Caco-2 (cell line): ENCODE measurements at regions of chr5 and their contacts with region 1.

Region 1: GRCh38 chr5:118987988-118988865 is at the start of gene DTWD2:
- DNase-seq: peak; percentile 95 to 98
- H3K4me3 ChIP-seq: peak within 1 kb of the TSS; percentile 94
- H3K4me3 Mint-ChIP-seq: peak within 1 kb of the TSS; percentile 81
- H3K27ac Mint-ChIP-seq: peak within 1 kb of the TSS; percentile 75
- H3K4me1 ChIP-seq: peaks cover 24% of the 10 kb centered on the region
- H3K4me1 Mint-ChIP-seq: peaks cover 17% of the 10 kb centered on the region
- H3K27me3 ChIP-seq: no peaks in the 10 kb centered on the region
- H3K27me3 Mint-ChIP-seq: no peaks in the 10 kb centered on the region
- CTCF ChIP-seq: peak; percentile 89 to 94
- total RNA-seq, gene DTWD2: 5.6 and 6.4 TPM in 2 replicates

Region 2: DNA sequence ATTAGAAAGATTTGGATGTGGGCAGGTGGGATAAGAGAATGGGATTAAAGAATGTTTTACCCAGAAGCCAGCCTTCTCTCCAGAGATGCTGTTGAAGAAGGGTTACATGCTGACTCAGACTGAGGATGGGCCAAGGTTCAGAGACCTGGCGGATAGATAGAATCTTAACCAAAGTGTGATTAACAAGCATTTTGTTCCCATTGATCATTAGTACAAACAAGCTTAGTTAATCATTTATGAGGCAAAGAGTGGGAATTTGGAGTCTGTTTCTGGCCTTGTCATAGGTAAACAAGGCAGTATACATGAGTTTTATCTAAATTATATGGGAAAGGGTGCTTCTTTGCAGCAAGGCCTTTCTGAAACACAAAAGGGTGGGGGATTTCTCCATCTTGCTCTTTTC is 20.9 kb after region 1 on chr5:
- CTCF ChIA-PET with region 1: no interaction called
- POLR2A ChIA-PET with region 1: interaction called, 7 read pairs
- intact Hi-C with region 1: loop called (anchors 1 kb)
- DNase-seq: peak; percentile 56 to 60
- H3K4me3 ChIP-seq: no peak overlapping the region
- H3K4me3 Mint-ChIP-seq: peak overlapping the region; percentile 38
- H3K27ac Mint-ChIP-seq: peak overlapping the region; percentile 63
- H3K4me1 ChIP-seq: peaks cover 17% of the 10 kb centered on the region
- H3K4me1 Mint-ChIP-seq: peaks cover 23% of the 10 kb centered on the region
- H3K27me3 ChIP-seq: no peaks in the 10 kb centered on the region
- H3K27me3 Mint-ChIP-seq: no peaks in the 10 kb centered on the region
- CTCF ChIP-seq: no peak

Region 3: GRCh38 chr5:119070828-119071572 is 82.8 kb after region 1 on chr5 and contains the start of gene DMXL1:
- CTCF ChIA-PET with region 1: interaction called, 4 read pairs
- POLR2A ChIA-PET with region 1: interaction called, 14 read pairs
- intact Hi-C with region 1: loop called (anchors 1 kb)
- DNase-seq: peak; percentile 99 to 100
- H3K4me3 ChIP-seq: peak within 1 kb of the TSS; percentile 86
- H3K4me3 Mint-ChIP-seq: peak within 1 kb of the TSS; percentile 86
- H3K27ac Mint-ChIP-seq: peak within 1 kb of the TSS; percentile 96
- H3K4me1 ChIP-seq: no peaks in the 10 kb centered on the region
- H3K4me1 Mint-ChIP-seq: peaks cover 6% of the 10 kb centered on the region
- H3K27me3 ChIP-seq: no peaks in the 10 kb centered on the region
- H3K27me3 Mint-ChIP-seq: no peaks in the 10 kb centered on the region
- CTCF ChIP-seq: no peak
- total RNA-seq, gene DMXL1: 30.0 and 33.1 TPM in 2 replicates

Region 4: GRCh38 chr5:119267958-119268386 is 279.7 kb after region 1 on chr5:
- CTCF ChIA-PET with region 1: interaction called, 13 read pairs
- POLR2A ChIA-PET with region 1: interaction called, 3 read pairs
- intact Hi-C with region 1: no loop called
- DNase-seq: peak; percentile 91 to 92
- H3K4me3 ChIP-seq: peak overlapping the region; percentile 68
- H3K4me3 Mint-ChIP-seq: peak overlapping the region; percentile 87
- H3K27ac Mint-ChIP-seq: peak overlapping the region; percentile 74
- H3K4me1 ChIP-seq: peaks cover under 1% of the 10 kb centered on the region
- H3K4me1 Mint-ChIP-seq: peaks cover 8% of the 10 kb centered on the region
- H3K27me3 ChIP-seq: no peaks in the 10 kb centered on the region
- H3K27me3 Mint-ChIP-seq: no peaks in the 10 kb centered on the region
- CTCF ChIP-seq: peak in 1 of 2 experiments; percentile 51

Region 5: DNA sequence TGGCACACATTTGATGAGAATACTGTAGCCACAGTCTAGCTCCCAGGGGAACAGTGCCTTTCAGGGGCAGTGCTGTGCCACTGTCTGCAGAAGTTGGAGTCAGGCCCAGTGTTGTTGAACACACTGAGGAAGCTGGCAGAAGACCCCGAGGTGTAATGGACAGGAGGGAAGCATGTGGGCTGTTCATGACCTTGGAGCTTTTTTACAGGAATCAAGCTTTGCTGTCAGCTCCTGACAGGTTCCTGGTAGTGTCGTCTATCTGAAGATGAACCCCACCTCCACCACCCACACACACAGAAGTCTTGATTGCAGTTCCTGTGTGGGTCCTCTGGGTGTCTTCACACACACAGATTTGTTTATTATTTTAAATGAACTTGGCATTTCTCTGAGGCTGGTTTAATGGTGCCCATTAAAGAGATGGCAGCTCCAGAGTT is 327.3 kb after region 1 on chr5:
- CTCF ChIA-PET with region 1: no interaction called
- POLR2A ChIA-PET with region 1: no interaction called
- intact Hi-C with region 1: loop called (anchors 5 kb)
- DNase-seq: no peak
- H3K4me3 ChIP-seq: no peak overlapping the region
- H3K4me3 Mint-ChIP-seq: no peak overlapping the region
- H3K27ac Mint-ChIP-seq: no peak overlapping the region
- H3K4me1 ChIP-seq: no peaks in the 10 kb centered on the region
- H3K4me1 Mint-ChIP-seq: no peaks in the 10 kb centered on the region
- H3K27me3 ChIP-seq: no peaks in the 10 kb centered on the region
- H3K27me3 Mint-ChIP-seq: no peaks in the 10 kb centered on the region
- CTCF ChIP-seq: peak in 1 of 2 experiments; percentile 28

Region 6: DNA sequence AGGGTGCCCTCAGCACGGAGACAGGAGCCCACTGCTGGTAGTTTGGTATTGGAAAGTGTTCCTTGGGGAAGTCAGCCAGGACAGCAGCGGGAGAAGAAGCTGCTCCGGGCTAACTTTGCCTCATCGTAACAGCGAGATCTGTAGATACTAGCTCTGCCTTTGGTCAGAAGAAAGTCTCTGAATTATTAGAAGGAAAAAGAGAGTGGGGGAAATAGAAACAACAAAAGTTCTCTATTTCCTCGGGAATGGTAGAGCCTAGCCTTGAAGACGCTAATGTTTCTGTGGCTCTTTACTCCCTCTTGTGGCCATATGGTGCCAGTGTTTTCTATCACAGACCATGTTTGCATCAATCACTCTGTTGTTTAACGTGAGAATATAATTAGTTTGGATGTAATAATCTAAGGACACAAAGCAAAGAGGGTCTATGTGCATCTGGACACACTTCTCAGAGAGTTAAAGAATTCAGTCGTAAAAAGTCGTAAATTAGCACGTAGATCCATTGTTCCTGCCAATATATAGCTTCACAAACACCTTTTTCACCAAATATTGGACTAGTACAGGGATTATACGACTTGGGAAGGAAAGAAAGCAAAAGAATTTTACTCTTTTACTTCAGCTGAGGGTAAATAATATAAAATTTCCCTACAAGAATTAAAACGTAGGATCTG is 423.8 kb after region 1 on chr5:
- CTCF ChIA-PET with region 1: interaction called, 15 read pairs
- POLR2A ChIA-PET with region 1: no interaction called
- intact Hi-C with region 1: loop called (anchors 1 kb)
- DNase-seq: peak; percentile 60 to 67
- H3K4me3 ChIP-seq: peak overlapping the region; percentile 54
- H3K4me3 Mint-ChIP-seq: peak overlapping the region; percentile 75
- H3K27ac Mint-ChIP-seq: peak overlapping the region; percentile 68
- H3K4me1 ChIP-seq: no peaks in the 10 kb centered on the region
- H3K4me1 Mint-ChIP-seq: peaks cover under 1% of the 10 kb centered on the region
- H3K27me3 ChIP-seq: no peaks in the 10 kb centered on the region
- H3K27me3 Mint-ChIP-seq: no peaks in the 10 kb centered on the region
- CTCF ChIP-seq: peak; percentile 89 to 96